ENCODE measurements at regions of chr14 and their contacts with region 1.

Region 1: GRCh38 chr14:92793709-92794546 is at the start of gene GOLGA5:
- DNase-seq: peak; percentile 96 to 99
- H3K4me3 ChIP-seq: peak within 1 kb of the TSS; percentile 84 to 96
- H3K27ac ChIP-seq: peak within 1 kb of the TSS; percentile 89 to 96
- H3K4me1 ChIP-seq: peaks cover 0 to 22% (median 10%) of the 10 kb centered on the region in 4 donors
- H3K27me3 ChIP-seq: no peaks in the 10 kb centered on the region
- CTCF ChIP-seq: peak in 1 of 2 experiments; percentile 42

Region 2: GRCh38 chr14:92704821-92705220 is 89.1 kb before region 1 on chr14:
- intact Hi-C with region 1: no loop called
- DNase-seq: no peak
- H3K4me3 ChIP-seq: no peak overlapping the region
- H3K27ac ChIP-seq: no peak overlapping the region
- H3K4me1 ChIP-seq: peaks cover 0 to 3% (median 0%) of the 10 kb centered on the region in 4 donors
- H3K27me3 ChIP-seq: no peaks in the 10 kb centered on the region
- CTCF ChIP-seq: no peak

Region 3: GRCh38 chr14:92750994-92751400 is 42.9 kb before region 1 on chr14:
- intact Hi-C with region 1: loop called (anchors 5 kb)
- DNase-seq: peak in 1 of 2 donors; percentile 74
- H3K4me3 ChIP-seq: peak overlapping the region in 1 of 2 donors; percentile 5
- H3K27ac ChIP-seq: peak overlapping the region; percentile 23 to 49
- H3K4me1 ChIP-seq: peaks cover 0 to 24% (median 9%) of the 10 kb centered on the region in 4 donors
- H3K27me3 ChIP-seq: no peaks in the 10 kb centered on the region
- CTCF ChIP-seq: no peak

Measured in tibial artery (tissue), 4 donors.